ENCODE measurements at regions of chr2 and their contacts with region 1.

Region 1: DNA sequence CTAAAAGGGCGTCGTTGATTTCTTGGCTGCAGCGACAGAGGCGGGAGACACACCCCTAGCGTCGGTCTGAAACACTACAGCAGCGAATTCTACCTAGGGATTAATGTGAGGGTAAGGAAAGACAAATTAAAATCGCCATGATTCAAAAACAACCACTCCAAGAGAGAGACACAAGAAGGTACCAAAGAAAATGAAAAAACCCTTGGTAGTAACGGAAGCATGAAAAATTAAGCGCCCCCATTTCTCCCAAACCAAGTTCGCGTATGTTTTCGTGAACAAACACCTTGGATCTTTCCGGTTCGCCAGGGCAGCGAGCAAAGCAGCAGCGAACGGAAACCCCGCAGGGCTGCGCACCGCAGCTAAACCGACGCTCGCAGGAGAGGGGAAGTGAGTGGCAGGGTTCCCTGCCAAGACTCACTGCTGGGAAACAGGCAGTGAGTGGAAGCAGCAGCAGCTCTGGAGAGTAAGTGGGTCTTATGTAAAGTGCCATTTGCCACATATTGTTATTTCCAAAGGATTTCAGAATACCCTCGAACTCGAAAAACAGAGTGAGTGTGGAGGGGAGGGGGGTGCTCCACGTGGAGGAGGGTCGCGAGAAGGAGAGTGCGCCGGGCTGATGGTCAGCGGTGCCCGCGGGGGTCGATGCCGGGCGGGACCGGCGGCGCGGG is 1.0 kb downstream of the PPP3R1 start:
- DNase-seq: peak; percentile 87
- ATAC-seq: peak; percentile 71
- H3K4me3 Mint-ChIP-seq: peak overlapping the region; percentile 98
- H3K27ac Mint-ChIP-seq: peak overlapping the region; percentile 97
- H3K4me1 Mint-ChIP-seq: peaks cover 35% of the 10 kb centered on the region
- H3K27me3 Mint-ChIP-seq: no peaks in the 10 kb centered on the region

Region 2: DNA sequence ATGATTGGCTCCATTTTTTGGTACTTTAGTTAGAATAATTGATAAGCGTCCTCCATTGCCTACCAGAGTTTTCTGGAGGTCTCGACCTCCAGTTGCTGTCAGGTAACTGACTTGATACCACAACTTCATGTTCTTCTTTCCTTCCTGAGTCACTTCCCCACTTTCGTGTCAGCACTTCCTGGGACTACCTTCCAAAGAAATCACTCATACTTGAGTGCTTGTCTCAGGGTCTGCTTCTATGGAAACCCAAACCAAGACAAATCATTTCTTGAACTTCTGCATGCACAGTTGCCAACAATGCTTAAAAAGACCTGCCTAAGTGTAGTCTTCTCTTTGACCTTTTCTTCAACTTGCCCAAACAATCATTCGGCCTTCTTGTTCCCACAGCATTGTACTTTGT is 1064.5 kb before region 1 on chr2:
- CTCF ChIA-PET with region 1: no interaction called
- POLR2A ChIA-PET with region 1: no interaction called
- intact Hi-C with region 1: no loop called
- DNase-seq: no peak
- ATAC-seq: no peak
- H3K4me3 Mint-ChIP-seq: no peak overlapping the region
- H3K27ac Mint-ChIP-seq: no peak overlapping the region
- H3K4me1 Mint-ChIP-seq: no peaks in the 10 kb centered on the region
- H3K27me3 Mint-ChIP-seq: no peaks in the 10 kb centered on the region

Region 3: GRCh38 chr2:68157402-68158133 is 93.8 kb before region 1 on chr2 and contains the start of gene PNO1:
- CTCF ChIA-PET with region 1: interaction called, 3 read pairs
- POLR2A ChIA-PET with region 1: interaction called, 13 read pairs
- intact Hi-C with region 1: loop called (anchors 1 kb)
- DNase-seq: peak; percentile 98
- ATAC-seq: peak; percentile 93
- H3K4me3 Mint-ChIP-seq: peak within 1 kb of the TSS; percentile 97
- H3K27ac Mint-ChIP-seq: peak within 1 kb of the TSS; percentile 100
- H3K4me1 Mint-ChIP-seq: peaks cover 51% of the 10 kb centered on the region
- H3K27me3 Mint-ChIP-seq: no peaks in the 10 kb centered on the region
- total RNA-seq, gene PNO1: 15.7 to 20.5 TPM

Region 4: DNA sequence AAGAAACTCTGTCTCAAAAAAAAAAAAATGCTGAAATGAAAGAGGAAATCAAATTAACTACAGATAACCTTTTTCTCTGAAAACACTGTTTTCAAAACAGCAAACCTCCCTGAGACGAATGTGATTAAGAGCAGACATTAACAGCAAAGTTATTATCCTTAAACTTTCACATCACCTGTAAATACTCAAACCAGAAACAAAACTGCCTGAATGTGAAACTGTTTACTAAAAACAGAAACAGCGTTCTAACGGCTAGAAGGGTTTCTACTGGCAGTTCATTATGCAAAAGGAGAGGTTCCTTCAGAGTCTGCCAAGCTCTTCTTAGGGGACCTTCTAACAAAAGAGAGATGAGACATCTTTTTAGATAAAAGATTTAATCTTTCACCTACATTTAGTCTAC is 47.7 kb before region 1 on chr2:
- CTCF ChIA-PET with region 1: interaction called, 4 read pairs
- POLR2A ChIA-PET with region 1: interaction called, 3 read pairs
- intact Hi-C with region 1: loop called (anchors 1 to 2 kb)
- DNase-seq: no peak
- ATAC-seq: peak; percentile 94
- H3K4me3 Mint-ChIP-seq: peak overlapping the region; percentile 58
- H3K27ac Mint-ChIP-seq: peak overlapping the region; percentile 86
- H3K4me1 Mint-ChIP-seq: peaks cover 74% of the 10 kb centered on the region
- H3K27me3 Mint-ChIP-seq: no peaks in the 10 kb centered on the region

Region 5: DNA sequence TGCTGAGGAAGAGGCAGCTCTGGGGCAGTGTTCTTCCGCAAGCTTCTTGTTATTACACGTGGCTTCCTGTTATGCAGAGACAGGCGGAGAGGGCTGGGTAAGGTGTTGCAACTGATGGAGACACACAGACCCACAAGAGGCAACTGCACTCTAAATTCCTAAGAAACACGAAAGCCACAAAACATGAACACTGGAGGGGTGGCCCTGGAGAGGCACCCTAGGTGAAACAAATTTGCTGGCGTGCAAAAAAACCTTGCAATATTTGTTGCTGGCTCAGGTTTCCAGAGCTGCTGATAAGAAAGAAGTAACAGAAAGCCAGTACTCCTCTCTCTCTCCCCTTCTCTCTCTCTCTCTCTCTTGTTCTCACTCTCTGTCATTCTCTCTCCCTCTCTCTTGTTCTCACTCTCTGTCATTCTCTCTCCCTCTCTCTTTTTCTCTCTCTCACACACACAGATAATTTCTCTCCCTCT is 515.1 kb after region 1 on chr2:
- CTCF ChIA-PET with region 1: no interaction called
- POLR2A ChIA-PET with region 1: no interaction called
- intact Hi-C with region 1: loop called in 1 of 2 experiments (anchors 2 kb)
- DNase-seq: peak; percentile 79
- ATAC-seq: peak; percentile 67
- H3K4me3 Mint-ChIP-seq: peak overlapping the region; percentile 72
- H3K27ac Mint-ChIP-seq: peak overlapping the region; percentile 99
- H3K4me1 Mint-ChIP-seq: peaks cover 98% of the 10 kb centered on the region
- H3K27me3 Mint-ChIP-seq: no peaks in the 10 kb centered on the region

Region 6: DNA sequence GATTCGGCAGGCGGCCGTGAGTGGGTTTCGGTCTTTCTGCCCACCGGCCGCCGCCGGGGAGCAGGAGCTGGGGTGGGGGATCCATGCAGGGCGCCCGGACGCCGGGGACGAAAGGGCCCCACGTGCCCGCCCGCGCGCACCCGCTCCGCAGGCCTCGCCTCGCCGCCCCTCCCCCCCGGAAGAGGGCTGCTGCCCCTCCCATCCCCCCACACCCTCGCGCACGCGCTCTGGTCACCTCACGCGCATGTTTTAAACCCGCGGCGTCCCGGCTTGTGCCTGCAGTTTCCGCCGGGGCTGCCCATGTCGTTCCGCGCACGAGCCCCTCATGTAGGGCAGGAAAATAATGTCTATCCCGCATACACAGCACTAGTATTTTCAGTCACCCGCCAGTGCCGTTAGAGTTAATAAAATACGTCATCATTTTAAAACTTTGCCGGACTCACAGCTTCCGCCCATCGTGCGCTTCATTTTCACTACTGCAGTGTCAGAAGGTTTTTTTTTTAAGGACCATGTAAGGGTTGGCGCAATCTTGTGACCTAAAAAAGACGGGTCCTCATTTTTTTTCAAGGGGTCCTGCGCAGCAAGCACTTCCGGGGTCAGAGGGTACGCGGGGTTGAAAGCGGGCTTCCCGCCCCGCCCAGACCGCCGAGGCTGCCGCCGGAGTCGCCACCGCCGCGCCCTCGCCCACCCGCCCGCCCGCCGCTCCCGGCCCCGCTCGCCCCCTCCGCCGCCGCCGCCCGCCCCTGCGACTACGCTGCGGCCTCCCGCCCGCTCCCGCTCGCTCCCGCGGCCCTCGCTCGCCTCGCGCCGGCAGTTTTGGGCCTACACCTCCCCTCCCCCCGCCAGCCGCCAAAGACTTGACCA is 1835.7 kb after region 1 on chr2 and contains the start of gene PCBP1:
- CTCF ChIA-PET with region 1: no interaction called
- POLR2A ChIA-PET with region 1: no interaction called
- intact Hi-C with region 1: loop called in 1 of 2 experiments (anchors 5 kb)
- DNase-seq: peak; percentile 98
- ATAC-seq: peak; percentile 37
- H3K4me3 Mint-ChIP-seq: peak within 1 kb of the TSS; percentile 100
- H3K27ac Mint-ChIP-seq: peak within 1 kb of the TSS; percentile 100
- H3K4me1 Mint-ChIP-seq: peaks cover 52% of the 10 kb centered on the region
- H3K27me3 Mint-ChIP-seq: no peaks in the 10 kb centered on the region
- total RNA-seq, gene PCBP1: 417 to 450 TPM

Measured in activated CD4-positive, alpha-beta T cell treated with anti-CD3 and anti-CD28 coated beads for 36 hours (primary cell).